Sciatic nerve (tissue), 2 donors: ENCODE measurements at regions of chr5 and their contacts with region 1.

Region 1: GRCh38 chr5:55621229-55621628 is 86.5 kb upstream of the PLPP1 start:
- DNase-seq: no peak
- ATAC-seq: peak; percentile 28

Region 2: DNA sequence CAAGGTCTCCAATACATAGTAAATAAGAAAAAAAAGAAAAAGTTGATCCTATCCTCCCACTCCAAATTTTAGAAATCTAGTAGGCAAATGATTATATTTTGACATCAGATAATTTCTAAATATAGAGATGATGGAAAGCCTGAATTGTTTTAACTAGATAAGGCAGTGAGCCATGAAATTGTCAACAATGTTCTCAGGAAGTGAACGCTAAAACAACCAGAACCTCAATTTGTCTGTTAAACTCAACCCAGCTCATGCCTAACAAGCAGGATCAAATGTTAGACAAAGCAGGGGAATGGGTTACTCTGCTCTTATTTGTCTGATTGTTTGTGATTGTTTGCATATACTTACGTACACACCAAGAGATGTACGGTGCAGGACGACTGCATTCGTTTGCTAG is 685.0 kb before region 1 on chr5:
- intact Hi-C with region 1: loop called (anchors 10 kb)
- DNase-seq: no peak
- ATAC-seq: no peak